ENCODE measurements at regions of chr9 and their contacts with region 1.

Region 1: DNA sequence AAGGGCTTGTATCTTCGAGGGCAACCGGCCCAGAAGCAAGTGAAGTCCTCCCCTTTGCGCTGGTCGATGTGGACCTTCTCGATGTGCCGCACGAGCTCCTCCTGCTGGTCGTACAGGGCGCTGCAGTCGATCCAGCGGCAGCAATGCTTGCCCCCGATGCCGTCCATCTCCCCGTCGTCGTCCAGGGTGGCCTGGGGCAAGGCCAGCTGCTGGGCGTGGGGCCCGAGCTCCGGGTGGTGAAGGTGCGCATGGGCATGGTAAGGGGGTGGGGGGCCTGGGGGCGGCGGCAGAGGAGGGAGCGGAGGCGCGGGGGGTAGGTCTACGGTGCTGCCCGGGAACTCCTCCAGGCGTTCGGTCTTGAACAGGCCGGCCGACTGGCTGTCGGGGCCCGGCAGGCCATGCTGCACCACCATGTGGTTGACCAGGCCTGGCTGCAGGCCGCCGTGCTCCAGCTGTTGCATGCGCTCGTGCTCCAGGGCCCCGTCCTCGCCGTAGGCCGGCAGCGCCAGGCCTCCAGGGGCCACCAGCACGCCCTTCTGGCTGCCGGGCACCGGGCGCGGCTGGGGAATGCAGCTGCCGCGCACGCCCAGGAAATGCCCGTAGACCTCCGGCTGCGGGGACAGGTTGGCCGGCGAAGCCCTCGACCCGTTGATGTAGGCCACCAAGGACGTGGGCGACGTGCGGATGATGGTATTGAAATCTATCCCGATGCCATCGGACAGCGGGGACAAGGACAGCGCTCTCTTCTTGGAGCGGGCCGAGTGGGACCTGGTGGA is 181.8 kb downstream of the GLIS3 start:
- DNase-seq: peak; percentile 54
- H3K4me3 Mint-ChIP-seq: no peak overlapping the region
- H3K27ac Mint-ChIP-seq: no peak overlapping the region
- H3K4me1 Mint-ChIP-seq: no peaks in the 10 kb centered on the region
- H3K27me3 Mint-ChIP-seq: no peaks in the 10 kb centered on the region

Region 2: DNA sequence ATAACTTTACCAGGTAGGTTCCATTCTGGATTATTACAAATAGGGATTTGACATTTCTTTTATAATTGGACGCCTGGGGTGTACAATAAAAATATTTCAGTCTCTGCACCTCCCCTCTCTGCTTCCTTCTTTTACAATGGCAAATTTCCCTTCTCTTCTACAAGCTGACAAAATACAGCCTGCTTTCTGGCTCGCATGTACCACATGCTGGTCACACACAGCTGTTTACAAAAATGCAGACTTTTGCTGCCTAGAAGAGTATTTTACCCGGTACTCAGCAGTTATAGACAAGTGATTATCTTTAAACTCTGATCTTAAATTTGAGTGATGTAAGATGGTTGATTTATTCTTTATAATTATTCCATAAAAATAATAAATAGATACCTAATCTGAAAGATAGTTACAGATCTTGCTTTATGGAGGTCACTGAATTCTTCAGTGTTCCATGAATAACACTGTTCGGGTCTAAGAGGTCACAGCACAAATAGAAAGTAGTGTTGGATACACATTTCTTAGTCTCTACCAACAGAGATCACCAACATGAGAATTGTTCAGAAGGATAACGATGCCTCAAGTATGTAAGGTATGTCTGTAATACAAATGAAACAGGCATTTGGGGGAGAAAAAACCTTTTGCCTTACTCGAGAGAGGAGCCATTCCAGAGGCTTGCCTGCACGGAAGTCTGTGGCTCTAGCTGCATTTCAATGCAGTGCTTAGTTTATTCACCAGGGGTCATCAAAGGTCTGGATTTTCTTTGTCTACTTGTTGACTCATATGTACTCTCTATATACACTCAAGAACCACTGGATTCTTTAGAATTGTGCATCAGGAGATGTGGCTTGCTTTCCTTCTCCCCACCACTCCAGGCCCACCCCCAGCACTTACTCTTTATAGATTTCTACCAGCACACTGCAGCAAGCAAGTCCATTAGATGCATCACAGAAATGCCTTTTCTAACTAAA is 385.7 kb before region 1 on chr9:
- CTCF ChIA-PET with region 1: interaction called, 31 read pairs
- POLR2A ChIA-PET with region 1: no interaction called
- DNase-seq: peak; percentile 44
- H3K4me3 Mint-ChIP-seq: no peak overlapping the region
- H3K27ac Mint-ChIP-seq: no peak overlapping the region
- H3K4me1 Mint-ChIP-seq: peaks cover 27% of the 10 kb centered on the region
- H3K27me3 Mint-ChIP-seq: no peaks in the 10 kb centered on the region

Region 3: GRCh38 chr9:4099976-4100735 is 17.9 kb before region 1 on chr9:
- CTCF ChIA-PET with region 1: no interaction called
- POLR2A ChIA-PET with region 1: no interaction called
- DNase-seq: no peak
- H3K4me3 Mint-ChIP-seq: no peak overlapping the region
- H3K27ac Mint-ChIP-seq: no peak overlapping the region
- H3K4me1 Mint-ChIP-seq: peaks cover 6% of the 10 kb centered on the region
- H3K27me3 Mint-ChIP-seq: peaks cover 10% of the 10 kb centered on the region

Measured in activated CD4-positive, alpha-beta memory T cell treated with anti-CD3 and anti-CD28 coated beads, Interleukin-2, amount 10 ng/mL, durations not matched to agents 7 days and 5 days (primary cell).